ENCODE measurements at regions of chr11 and their contacts with region 1.

Region 1: GRCh38 chr11:67053896-67054842 is 2.5 kb upstream of the RHOD start:
- DNase-seq: no peak
- H3K4me3 ChIP-seq: no peak overlapping the region
- H3K27me3 ChIP-seq: peaks cover 2% of the 10 kb centered on the region; the same call in 1 of the 2 replicates
- CTCF ChIP-seq: peak; percentile 91

Region 2: GRCh38 chr11:66768088-66768521 is 286.1 kb before region 1 on chr11:
- CTCF ChIA-PET with region 1: no interaction called
- POLR2A ChIA-PET with region 1: no interaction called
- DNase-seq: no peak
- H3K4me3 ChIP-seq: no peak overlapping the region
- H3K27me3 ChIP-seq: no peaks in the 10 kb centered on the region
- CTCF ChIP-seq: no peak

Region 3: DNA sequence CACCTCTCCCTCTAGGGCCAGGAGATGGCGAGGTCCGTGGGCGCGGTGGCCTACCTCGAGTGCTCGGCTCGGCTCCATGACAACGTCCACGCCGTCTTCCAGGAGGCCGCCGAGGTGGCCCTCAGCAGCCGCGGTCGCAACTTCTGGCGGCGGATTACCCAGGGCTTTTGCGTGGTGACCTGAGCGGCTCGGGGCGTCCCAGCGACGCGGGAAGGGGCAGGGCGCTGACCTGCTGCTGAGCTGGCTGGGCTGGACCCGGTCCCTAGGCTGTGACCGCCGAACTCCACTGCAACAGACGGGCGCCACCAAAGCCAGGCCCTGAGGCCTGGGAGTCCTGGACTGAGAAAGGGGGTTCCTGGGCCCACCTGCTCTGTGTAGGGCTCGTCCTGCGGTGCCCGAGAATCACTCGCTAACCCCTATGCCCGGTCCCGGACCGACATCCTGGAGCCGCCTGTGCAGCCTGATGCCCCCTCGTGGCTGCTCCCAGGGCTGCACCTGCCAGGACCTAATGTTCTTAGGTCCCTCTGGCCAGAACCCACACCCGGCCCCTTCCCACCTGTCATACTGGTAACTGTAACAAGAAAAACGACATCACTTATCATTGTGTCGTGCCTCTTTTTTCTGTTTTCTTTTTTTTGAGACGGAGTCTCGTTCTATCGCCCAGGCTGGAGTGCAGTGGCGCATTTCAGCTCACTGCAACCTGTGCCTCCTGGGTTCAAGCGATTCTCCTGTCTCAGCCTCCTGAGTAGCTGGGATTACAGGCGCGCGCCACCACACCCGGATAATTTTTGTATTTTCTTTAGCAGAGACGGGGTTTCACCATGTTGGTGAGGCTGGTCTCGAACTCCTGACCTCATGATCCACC is 17.5 kb after region 1 on chr11:
- CTCF ChIA-PET with region 1: interaction called, 34 read pairs
- POLR2A ChIA-PET with region 1: interaction called, 3 read pairs
- DNase-seq: no peak
- H3K4me3 ChIP-seq: no peak overlapping the region
- H3K27me3 ChIP-seq: no peaks in the 10 kb centered on the region
- CTCF ChIP-seq: peak; percentile 84

Region 4: GRCh38 chr11:67167086-67167485 is 112.9 kb after region 1 on chr11:
- CTCF ChIA-PET with region 1: no interaction called
- POLR2A ChIA-PET with region 1: no interaction called
- DNase-seq: no peak
- H3K4me3 ChIP-seq: no peak overlapping the region
- H3K27me3 ChIP-seq: no peaks in the 10 kb centered on the region
- CTCF ChIP-seq: no peak

Measured in BJ (cell line).